ENCODE measurements at regions of chr14 and their contacts with region 1.

Region 1: GRCh38 chr14:75560962-75561432 is 17.4 kb upstream of the FLVCR2 start:
- H3K4me3 ChIP-seq: no peak overlapping the region
- H3K27ac ChIP-seq: no peak overlapping the region
- H3K4me1 ChIP-seq: no peaks in the 10 kb centered on the region
- CTCF ChIP-seq: peak; percentile 55

Region 2: GRCh38 chr14:75022655-75023054 is 538.3 kb before region 1 on chr14:
- CTCF ChIA-PET with region 1: no interaction called
- POLR2A ChIA-PET with region 1: no interaction called
- H3K4me3 ChIP-seq: no peak overlapping the region
- H3K27ac ChIP-seq: no peak overlapping the region
- H3K4me1 ChIP-seq: no peaks in the 10 kb centered on the region
- CTCF ChIP-seq: no peak

Region 3: GRCh38 chr14:75399821-75400678 is 160.9 kb before region 1 on chr14:
- CTCF ChIA-PET with region 1: no interaction called
- POLR2A ChIA-PET with region 1: no interaction called
- H3K4me3 ChIP-seq: no peak overlapping the region
- H3K27ac ChIP-seq: no peak overlapping the region
- H3K4me1 ChIP-seq: peaks cover 5% of the 10 kb centered on the region; the same call in 1 of the 2 replicates
- CTCF ChIP-seq: no peak

Region 4: GRCh38 chr14:75487155-75487671 is 73.8 kb before region 1 on chr14:
- CTCF ChIA-PET with region 1: interaction called, 18 read pairs
- POLR2A ChIA-PET with region 1: no interaction called
- H3K4me3 ChIP-seq: no peak overlapping the region
- H3K27ac ChIP-seq: no peak overlapping the region
- H3K4me1 ChIP-seq: no peaks in the 10 kb centered on the region
- CTCF ChIP-seq: no peak

Region 5: GRCh38 chr14:75518625-75519024 is 42.4 kb before region 1 on chr14:
- CTCF ChIA-PET with region 1: interaction called, 11 read pairs
- POLR2A ChIA-PET with region 1: interaction called, 3 read pairs
- H3K4me3 ChIP-seq: no peak overlapping the region
- H3K27ac ChIP-seq: no peak overlapping the region
- H3K4me1 ChIP-seq: no peaks in the 10 kb centered on the region
- CTCF ChIP-seq: no peak

Region 6: DNA sequence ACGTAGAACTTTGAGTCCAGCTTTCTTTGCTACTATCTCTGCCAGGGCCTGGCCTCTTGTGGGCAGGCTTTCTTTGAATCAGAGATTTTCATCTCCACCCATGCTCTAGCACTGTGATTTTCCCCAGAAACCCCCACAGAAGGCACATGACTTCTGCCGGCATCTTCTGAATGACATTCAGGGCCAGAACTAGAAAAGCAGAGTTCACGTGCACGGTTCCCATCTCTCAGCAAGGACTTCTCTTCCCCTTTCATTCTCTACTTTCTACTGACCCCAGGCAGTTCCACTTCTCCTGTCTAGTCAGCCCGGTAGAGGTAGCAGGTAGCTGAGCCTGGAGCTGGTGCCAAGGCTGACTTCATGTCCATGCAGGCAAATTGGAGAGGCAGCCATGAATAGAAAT is 11.8 kb before region 1 on chr14:
- CTCF ChIA-PET with region 1: interaction called, 20 read pairs
- POLR2A ChIA-PET with region 1: no interaction called
- H3K4me3 ChIP-seq: no peak overlapping the region
- H3K27ac ChIP-seq: no peak overlapping the region
- H3K4me1 ChIP-seq: no peaks in the 10 kb centered on the region
- CTCF ChIP-seq: no peak

Region 7: GRCh38 chr14:75654127-75654732 is 93.2 kb after region 1 on chr14:
- CTCF ChIA-PET with region 1: interaction called, 21 read pairs
- POLR2A ChIA-PET with region 1: no interaction called
- H3K4me3 ChIP-seq: no peak overlapping the region
- H3K27ac ChIP-seq: no peak overlapping the region
- H3K4me1 ChIP-seq: no peaks in the 10 kb centered on the region
- CTCF ChIP-seq: peak; percentile 53; the same call in 1 of the 2 replicates

Measured in HEK293 (cell line).